Vagina (tissue), 2 donors: ENCODE measurements at regions of chr5 and their contacts with region 1.

Region 1: GRCh38 chr5:149728303-149728702 is 1.8 kb upstream of the PPARGC1B start:
- DNase-seq: no peak
- H3K4me3 ChIP-seq: no peak overlapping the region
- H3K27ac ChIP-seq: no peak overlapping the region
- H3K4me1 ChIP-seq: peaks cover 17% of the 10 kb centered on the region
- H3K27me3 ChIP-seq: no peaks in the 10 kb centered on the region
- CTCF ChIP-seq: no peak
- POLR2A ChIP-seq: no peak

Region 2: DNA sequence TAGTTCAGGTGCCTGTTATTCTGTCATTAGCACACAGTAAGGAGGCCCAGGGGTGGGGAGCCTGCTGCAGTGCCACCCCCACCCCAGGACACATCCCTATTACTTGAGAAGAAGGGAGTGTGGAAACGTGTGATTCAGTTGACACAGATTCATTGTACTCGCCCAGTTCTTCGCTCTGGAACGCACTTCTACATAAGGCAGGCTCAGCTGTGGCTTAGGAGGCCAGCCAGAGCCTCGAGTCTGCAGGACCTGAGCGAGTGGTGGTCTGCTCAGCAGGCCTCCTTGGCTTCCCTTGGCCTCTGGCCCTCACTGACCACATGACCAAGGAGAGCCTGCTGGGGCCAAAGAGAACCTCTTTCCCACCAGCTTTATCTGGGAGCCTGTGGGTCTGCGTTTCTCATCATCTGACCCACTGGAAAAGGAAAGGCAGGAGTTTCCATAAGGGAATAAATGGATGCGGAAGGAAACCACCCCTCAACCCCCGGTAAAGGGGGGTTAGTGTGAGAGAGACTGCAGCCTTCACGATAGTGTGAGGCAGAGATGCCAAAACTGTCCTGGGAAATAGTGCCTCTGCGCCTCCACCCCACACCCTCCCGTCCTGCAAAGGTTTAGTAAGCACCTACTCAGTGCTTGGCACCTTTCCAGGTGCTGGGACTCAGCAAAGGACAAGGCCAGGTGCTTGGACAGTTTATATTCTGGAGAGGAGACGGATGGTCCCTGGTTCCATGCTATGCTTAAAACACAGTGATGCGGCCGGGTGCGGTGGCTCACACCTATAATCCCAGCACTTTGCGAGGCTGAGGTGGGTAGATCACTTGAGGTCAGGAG is 75.6 kb after region 1 on chr5:
- intact Hi-C with region 1: no loop called
- DNase-seq: no peak
- H3K4me3 ChIP-seq: no peak overlapping the region
- H3K27ac ChIP-seq: peak overlapping the region; percentile 78
- H3K4me1 ChIP-seq: peaks cover 80% of the 10 kb centered on the region
- H3K27me3 ChIP-seq: no peaks in the 10 kb centered on the region
- CTCF ChIP-seq: no peak
- POLR2A ChIP-seq: no peak

Region 3: DNA sequence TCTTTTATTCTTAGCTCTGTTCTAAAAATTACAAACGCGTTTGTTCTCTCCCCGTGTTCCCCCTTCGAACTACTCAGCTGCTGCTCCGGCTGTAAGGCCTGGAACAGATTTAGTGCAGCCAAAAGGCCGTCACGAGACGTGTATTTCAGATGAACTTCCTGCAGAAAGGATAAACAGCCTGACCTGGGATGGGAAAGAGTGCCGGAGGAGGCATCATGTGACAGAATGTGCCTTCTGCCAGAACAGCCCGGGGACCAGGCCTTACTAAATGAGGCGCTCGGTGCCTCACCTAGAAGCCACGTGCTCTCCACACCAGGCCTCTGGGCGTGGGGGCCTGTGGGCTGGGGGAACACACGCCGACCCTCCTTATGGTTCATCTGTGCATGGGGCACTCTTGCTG is 96.5 kb after region 1 on chr5:
- intact Hi-C with region 1: loop called (anchors 5 kb)
- DNase-seq: no peak
- H3K4me3 ChIP-seq: no peak overlapping the region
- H3K27ac ChIP-seq: peak overlapping the region; percentile 61
- H3K4me1 ChIP-seq: peaks cover 30% of the 10 kb centered on the region
- H3K27me3 ChIP-seq: no peaks in the 10 kb centered on the region
- CTCF ChIP-seq: no peak
- POLR2A ChIP-seq: no peak

Region 4: GRCh38 chr5:149878039-149878747 is 149.9 kb after region 1 on chr5:
- intact Hi-C with region 1: no loop called
- DNase-seq: no peak
- H3K4me3 ChIP-seq: no peak overlapping the region
- H3K27ac ChIP-seq: no peak overlapping the region
- H3K4me1 ChIP-seq: no peaks in the 10 kb centered on the region
- H3K27me3 ChIP-seq: no peaks in the 10 kb centered on the region
- CTCF ChIP-seq: no peak
- POLR2A ChIP-seq: no peak